A673 (cell line): ENCODE measurements at regions of chr5 and their contacts with region 1.

Region 1: DNA sequence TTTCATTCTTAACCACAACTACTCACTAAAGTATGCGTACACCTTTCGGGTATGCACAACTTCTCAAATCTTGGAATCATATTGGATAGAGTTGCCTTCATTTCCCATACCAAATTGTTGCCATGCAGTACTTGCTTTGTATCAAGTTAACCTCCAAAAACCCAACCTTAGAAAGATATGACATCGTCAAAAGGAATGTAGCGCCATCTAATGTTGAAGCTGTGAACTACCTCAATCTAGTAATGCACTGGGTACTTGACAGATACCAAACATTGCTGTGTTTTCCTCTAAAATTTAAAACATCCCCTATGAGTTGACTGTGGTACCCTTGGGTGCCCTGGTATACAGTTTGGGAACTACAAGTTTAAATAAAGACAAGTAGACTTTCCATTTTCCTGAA is 318.4 kb downstream of the ARL15 start:
- DNase-seq: peak; percentile 48
- H3K4me3 ChIP-seq: no peak overlapping the region
- H3K27ac ChIP-seq: no peak overlapping the region
- H3K4me1 ChIP-seq: peaks cover 16% of the 10 kb centered on the region
- H3K27me3 ChIP-seq: no peaks in the 10 kb centered on the region
- CTCF ChIP-seq: peak; percentile 61

Region 2: GRCh38 chr5:53425598-53426511 is 566.1 kb before region 1 on chr5:
- CTCF ChIA-PET with region 1: no interaction called
- POLR2A ChIA-PET with region 1: no interaction called
- intact Hi-C with region 1: loop called (anchors 10 kb)
- DNase-seq: peak; percentile 74
- H3K4me3 ChIP-seq: no peak overlapping the region
- H3K27ac ChIP-seq: no peak overlapping the region
- H3K4me1 ChIP-seq: no peaks in the 10 kb centered on the region
- H3K27me3 ChIP-seq: no peaks in the 10 kb centered on the region
- CTCF ChIP-seq: peak; percentile 72

Region 3: GRCh38 chr5:53478411-53479044 is 513.4 kb before region 1 on chr5:
- CTCF ChIA-PET with region 1: no interaction called
- POLR2A ChIA-PET with region 1: no interaction called
- intact Hi-C with region 1: loop called (anchors 5 kb)
- DNase-seq: peak; percentile 83
- H3K4me3 ChIP-seq: peak overlapping the region; percentile 45
- H3K27ac ChIP-seq: no peak overlapping the region
- H3K4me1 ChIP-seq: peaks cover 5% of the 10 kb centered on the region
- H3K27me3 ChIP-seq: peaks cover 55% of the 10 kb centered on the region
- CTCF ChIP-seq: peak; percentile 73

Region 4: GRCh38 chr5:53582225-53582624 is 409.7 kb before region 1 on chr5:
- CTCF ChIA-PET with region 1: no interaction called
- POLR2A ChIA-PET with region 1: no interaction called
- intact Hi-C with region 1: no loop called
- DNase-seq: no peak
- H3K4me3 ChIP-seq: no peak overlapping the region
- H3K27ac ChIP-seq: no peak overlapping the region
- H3K4me1 ChIP-seq: no peaks in the 10 kb centered on the region
- H3K27me3 ChIP-seq: no peaks in the 10 kb centered on the region
- CTCF ChIP-seq: no peak

Region 5: DNA sequence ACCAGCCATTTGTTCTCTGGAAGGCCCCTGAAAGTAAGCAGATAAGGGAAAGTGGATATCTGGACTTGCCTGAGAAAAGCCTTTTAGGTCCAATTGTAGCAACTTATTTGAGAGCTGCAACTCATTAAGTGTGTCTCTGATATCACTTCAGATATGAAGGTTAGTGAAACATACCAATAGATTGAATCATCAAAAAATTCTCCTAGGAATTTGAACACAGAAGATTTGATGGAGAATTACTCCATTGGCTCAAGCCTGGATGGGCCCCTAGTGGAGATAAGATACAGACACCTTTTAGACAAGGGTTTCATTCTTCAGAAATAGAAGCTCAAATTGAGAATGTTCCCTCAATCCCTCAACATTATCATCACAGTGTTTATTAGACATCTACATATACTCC is 74.8 kb before region 1 on chr5:
- CTCF ChIA-PET with region 1: no interaction called
- POLR2A ChIA-PET with region 1: no interaction called
- intact Hi-C with region 1: no loop called
- DNase-seq: no peak
- H3K4me3 ChIP-seq: no peak overlapping the region
- H3K27ac ChIP-seq: no peak overlapping the region
- H3K4me1 ChIP-seq: no peaks in the 10 kb centered on the region
- H3K27me3 ChIP-seq: no peaks in the 10 kb centered on the region
- CTCF ChIP-seq: peak; percentile 23; the same call in 1 of the 2 replicates

Region 6: GRCh38 chr5:54148067-54148466 is 156.1 kb after region 1 on chr5:
- CTCF ChIA-PET with region 1: no interaction called
- POLR2A ChIA-PET with region 1: interaction called, 10 read pairs
- intact Hi-C with region 1: no loop called
- DNase-seq: peak; percentile 2
- H3K4me3 ChIP-seq: no peak overlapping the region
- H3K27ac ChIP-seq: no peak overlapping the region
- H3K4me1 ChIP-seq: no peaks in the 10 kb centered on the region
- H3K27me3 ChIP-seq: no peaks in the 10 kb centered on the region
- CTCF ChIP-seq: peak; percentile 32; the same call in 1 of the 2 replicates